Esophagus muscularis mucosa (tissue), 4 donors: ENCODE measurements at regions of chr5 and their contacts with region 1.

Region 1: DNA sequence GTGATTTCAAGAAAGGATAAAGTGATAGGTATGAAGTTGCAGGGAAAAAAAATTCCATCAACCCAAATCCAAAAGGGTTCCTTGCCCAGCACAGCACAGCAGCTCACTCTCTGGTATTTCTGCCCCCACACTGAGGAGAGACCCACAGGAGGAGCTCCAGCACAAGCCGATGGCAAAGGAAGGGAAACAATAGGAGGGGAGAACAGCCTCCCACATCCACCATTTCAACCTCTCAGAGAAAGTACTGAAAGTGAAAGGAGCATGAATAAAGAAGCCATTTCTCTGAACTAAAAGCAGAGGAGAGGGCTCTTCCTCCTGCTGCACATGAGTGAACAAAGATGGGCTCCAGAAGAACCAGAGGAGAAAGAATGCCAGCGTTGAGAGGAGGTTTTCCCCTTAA is 54.9 kb upstream of the ZSWIM6 start:
- DNase-seq: no peak
- H3K4me3 ChIP-seq: no peak overlapping the region
- H3K27ac ChIP-seq: peak overlapping the region; percentile 36 to 63 (median 48)
- H3K4me1 ChIP-seq: peaks cover 10 to 49% (median 43%) of the 10 kb centered on the region in 4 donors
- H3K27me3 ChIP-seq: no peaks in the 10 kb centered on the region
- CTCF ChIP-seq: peak; percentile 32 to 45 (median 36)
- EP300 ChIP-seq: no peak
- POLR2A ChIP-seq: no peak

Region 2: GRCh38 chr5:60404171-60404570 is 873.0 kb before region 1 on chr5:
- intact Hi-C with region 1: no loop called
- DNase-seq: no peak
- H3K4me3 ChIP-seq: no peak overlapping the region
- H3K27ac ChIP-seq: peak overlapping the region in 3 of 4 donors; percentile 12 to 47 (median 23)
- H3K4me1 ChIP-seq: peaks cover 0 to 39% (median 26%) of the 10 kb centered on the region in 4 donors
- H3K27me3 ChIP-seq: no peaks in the 10 kb centered on the region
- CTCF ChIP-seq: no peak
- EP300 ChIP-seq: no peak
- POLR2A ChIP-seq: no peak

Region 3: GRCh38 chr5:60896991-60897390 is 380.2 kb before region 1 on chr5:
- intact Hi-C with region 1: no loop called
- DNase-seq: no peak
- H3K4me3 ChIP-seq: no peak overlapping the region
- H3K27ac ChIP-seq: no peak overlapping the region
- H3K4me1 ChIP-seq: no peaks in the 10 kb centered on the region
- H3K27me3 ChIP-seq: no peaks in the 10 kb centered on the region
- CTCF ChIP-seq: no peak
- EP300 ChIP-seq: no peak
- POLR2A ChIP-seq: no peak

Region 4: DNA sequence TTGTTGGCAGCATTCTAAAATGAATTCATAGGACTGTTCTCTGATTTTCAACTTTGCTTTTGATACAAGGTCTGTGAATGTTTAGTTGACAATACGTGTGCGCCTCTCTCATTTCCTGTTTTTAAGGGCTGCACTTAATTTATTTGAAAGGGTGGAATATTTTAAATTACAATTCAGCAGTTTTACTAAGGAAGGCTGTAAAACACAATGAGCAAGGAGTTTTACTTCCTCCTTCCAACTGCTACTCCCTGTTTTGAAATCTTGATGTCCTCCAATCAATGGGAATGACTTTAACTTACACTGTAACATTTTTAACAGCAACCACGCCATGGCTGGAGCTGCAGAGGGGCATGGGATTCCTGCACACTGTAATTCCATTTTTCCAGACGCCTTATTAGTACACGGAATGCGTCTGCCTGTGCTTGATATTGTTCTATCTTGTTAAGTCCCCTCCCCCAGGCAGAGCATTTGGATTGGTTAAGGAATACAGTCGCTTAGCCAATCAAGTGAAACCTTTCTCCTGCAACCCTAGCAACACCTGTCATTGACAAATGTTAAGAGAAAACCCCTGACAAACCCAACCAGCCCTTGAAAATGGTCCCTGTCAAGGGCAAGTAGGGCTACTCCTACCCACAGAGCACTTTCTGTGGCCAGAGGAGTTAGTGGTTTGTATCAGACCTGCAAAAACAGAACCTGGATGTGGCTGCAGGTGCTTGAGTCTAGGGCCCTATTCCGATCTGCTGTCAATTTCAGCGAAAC is 42.4 kb after region 1 on chr5:
- intact Hi-C with region 1: loop called (anchors 10 kb)
- DNase-seq: no peak
- H3K4me3 ChIP-seq: no peak overlapping the region
- H3K27ac ChIP-seq: peak overlapping the region in 2 of 4 donors; percentile 2 to 12
- H3K4me1 ChIP-seq: peaks cover 4 to 24% (median 17%) of the 10 kb centered on the region in 4 donors
- H3K27me3 ChIP-seq: no peaks in the 10 kb centered on the region
- CTCF ChIP-seq: no peak
- EP300 ChIP-seq: no peak
- POLR2A ChIP-seq: no peak

Region 5: DNA sequence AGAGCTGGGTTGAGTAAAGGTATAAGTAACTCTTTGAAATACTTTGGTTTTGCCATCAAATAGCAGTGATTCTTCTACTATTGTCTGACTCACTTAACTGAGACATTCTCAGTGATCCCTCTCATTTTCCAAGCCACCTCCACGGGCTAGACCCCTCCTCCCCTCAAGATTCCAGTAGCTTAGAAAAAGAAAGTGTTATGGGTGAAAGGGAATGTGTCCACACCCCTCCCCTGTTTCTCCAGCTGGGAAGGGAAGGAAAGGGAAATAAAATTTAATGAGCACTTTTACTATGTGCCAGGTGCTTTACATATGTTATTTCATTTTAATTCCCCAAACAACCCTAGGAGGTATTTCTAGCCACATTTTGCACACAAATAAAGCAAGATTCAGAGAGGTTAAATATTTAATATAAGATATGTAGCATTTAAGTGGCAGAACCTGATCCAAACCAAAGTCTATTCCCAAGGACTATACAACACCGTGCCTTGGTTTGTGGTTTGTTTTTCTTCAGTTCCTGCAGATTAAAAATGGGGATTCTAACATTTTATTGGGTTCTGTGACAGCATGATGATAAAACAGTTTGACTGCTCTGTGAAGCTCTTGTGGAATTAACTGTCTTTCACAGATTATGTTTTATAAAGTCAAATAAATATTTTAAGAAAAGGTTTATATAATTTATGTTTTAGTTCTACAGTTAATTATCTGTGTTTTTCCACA is 190.7 kb after region 1 on chr5:
- intact Hi-C with region 1: no loop called
- DNase-seq: no peak
- H3K4me3 ChIP-seq: no peak overlapping the region
- H3K27ac ChIP-seq: no peak overlapping the region
- H3K4me1 ChIP-seq: peaks cover 18 to 51% (median 40%) of the 10 kb centered on the region in 4 donors
- H3K27me3 ChIP-seq: no peaks in the 10 kb centered on the region
- CTCF ChIP-seq: no peak
- EP300 ChIP-seq: no peak
- POLR2A ChIP-seq: no peak